Heart left ventricle (tissue), 16 donors: ENCODE measurements at regions of chr15 and their contacts with region 1.

Region 1: GRCh38 chr15:64355944-64356709 is at the start of gene CSNK1G1:
- DNase-seq: peak; percentile 96 to 97 (median 96)
- ATAC-seq: peak; percentile 100
- H3K4me3 ChIP-seq: peak within 1 kb of the TSS; percentile 59 to 98 (median 84)
- H3K27ac ChIP-seq: peak within 1 kb of the TSS; percentile 16 to 85 (median 76)
- H3K4me1 ChIP-seq: peaks cover 0 to 32% (median 12%) of the 10 kb centered on the region in 12 donors
- H3K27me3 ChIP-seq: no peaks in the 10 kb centered on the region
- CTCF ChIP-seq: peak in 8 of 12 donors; percentile 22 to 52 (median 35)
- POLR2A ChIP-seq: peak in 1 of 2 donors; percentile 34
- total RNA-seq, gene CSNK1G1: 3.9 to 15.0 (median 7.6) TPM

Region 2: DNA sequence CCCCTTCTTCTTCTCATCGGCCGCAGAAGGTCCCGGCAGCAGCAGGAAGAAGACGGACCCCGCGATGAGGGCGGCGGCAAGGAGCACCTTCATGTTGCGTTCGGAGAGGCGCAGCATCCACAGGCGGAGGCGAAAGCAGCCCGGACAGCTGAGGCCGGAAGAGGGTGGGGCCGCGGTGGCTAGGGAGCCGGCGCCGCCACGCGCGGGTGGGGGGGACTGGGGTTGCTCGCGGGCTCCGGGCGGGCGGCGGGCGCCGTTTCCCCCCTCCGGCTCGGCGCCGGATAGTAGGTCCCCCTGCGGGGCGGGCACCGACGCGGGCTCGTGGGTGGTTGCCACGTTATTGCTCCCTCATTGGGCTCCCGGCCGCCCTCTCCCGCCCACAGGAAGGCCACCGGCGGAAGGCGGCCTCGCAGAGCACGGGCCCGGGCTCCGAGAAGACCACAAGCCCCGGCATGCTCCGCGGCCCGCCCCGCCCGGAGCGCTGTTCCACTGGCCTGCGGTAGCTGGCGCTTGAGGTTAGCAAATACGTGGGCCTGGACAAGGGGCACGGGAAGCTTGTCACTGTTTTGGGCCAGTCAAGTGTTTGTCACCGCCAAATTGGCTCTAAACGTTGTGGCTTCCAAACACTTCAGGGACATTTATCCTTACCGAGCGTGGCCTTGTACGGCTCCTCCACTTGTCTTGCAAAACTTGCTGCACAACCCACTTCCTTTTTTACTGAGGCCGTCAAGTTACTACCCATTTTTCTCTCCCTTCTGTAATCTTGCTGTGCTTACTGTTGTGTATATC is 193.1 kb before region 1 on chr15 and contains the start of gene PPIB:
- intact Hi-C with region 1: loop called in 4 of 10 experiments (anchors 5 kb)
- DNase-seq: peak; percentile 97 to 100 (median 99)
- ATAC-seq: peak; percentile 94 to 97 (median 96)
- H3K4me3 ChIP-seq: peak within 1 kb of the TSS; percentile 67 to 95 (median 84)
- H3K27ac ChIP-seq: peak within 1 kb of the TSS; percentile 72 to 95 (median 90)
- H3K4me1 ChIP-seq: peaks cover 11 to 58% (median 44%) of the 10 kb centered on the region in 12 donors
- H3K27me3 ChIP-seq: no peaks in the 10 kb centered on the region
- CTCF ChIP-seq: peak in 11 of 12 donors; percentile 20 to 76 (median 43)
- POLR2A ChIP-seq: peak; percentile 41 to 72
- total RNA-seq, gene PPIB: 73.7 to 239 (median 113) TPM

Region 3: DNA sequence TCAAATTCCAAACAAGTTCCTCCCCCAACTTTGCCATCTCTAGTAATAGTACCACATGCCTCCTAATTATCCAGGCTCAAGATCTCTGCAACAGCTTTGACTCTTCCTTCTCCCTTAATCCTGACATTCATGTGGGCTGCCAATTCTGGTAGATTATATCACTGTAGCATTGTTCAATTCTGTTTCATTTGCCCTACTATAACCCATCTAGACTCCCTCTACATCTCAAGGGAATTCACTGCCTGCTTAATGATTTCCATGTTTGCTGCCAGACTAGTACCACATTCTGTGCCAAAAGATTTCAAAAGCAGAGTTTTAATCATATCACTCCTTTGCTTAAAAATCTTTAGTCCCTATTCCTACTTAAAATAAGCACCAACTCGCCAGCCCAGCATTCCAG is 158.7 kb before region 1 on chr15:
- intact Hi-C with region 1: loop called in 1 of 10 experiments (anchors 5 kb)
- DNase-seq: no peak
- ATAC-seq: peak in 1 of 4 donors; percentile 31
- H3K4me3 ChIP-seq: no peak overlapping the region
- H3K27ac ChIP-seq: no peak overlapping the region
- H3K4me1 ChIP-seq: peaks cover 0 to 6% (median 0%) of the 10 kb centered on the region in 12 donors
- H3K27me3 ChIP-seq: no peaks in the 10 kb centered on the region
- CTCF ChIP-seq: no peak
- POLR2A ChIP-seq: no peak

Region 4: DNA sequence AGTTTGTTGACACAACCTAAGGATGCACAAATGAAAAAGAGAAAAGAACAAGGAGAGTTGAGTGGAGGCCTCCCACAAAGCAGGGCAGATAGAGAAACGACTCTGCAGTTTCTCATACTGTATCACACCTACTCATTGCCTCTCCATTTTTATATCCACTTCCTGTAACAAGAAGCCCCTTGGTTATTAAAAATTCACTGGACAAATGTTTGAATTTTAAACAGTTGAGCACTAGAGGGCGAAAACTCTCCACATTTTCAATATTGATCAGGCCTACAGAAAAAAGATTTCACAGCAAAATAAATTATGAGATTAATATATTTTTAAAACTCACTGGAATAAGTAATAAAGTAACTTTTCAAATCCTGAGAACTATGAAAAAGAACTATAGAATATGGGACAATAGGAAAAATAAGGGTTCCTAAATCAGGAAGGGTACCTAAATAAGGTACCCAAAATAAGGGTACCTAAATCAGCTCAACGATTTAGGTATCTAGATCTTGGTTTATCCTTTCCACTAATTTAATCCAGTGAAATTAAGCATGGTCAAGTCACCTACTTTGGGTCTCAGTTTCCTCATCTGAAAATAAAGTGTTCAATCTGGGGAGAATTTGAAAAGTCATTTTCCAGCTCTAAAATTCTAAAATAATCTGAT is 146.3 kb before region 1 on chr15:
- intact Hi-C with region 1: loop called in 7 of 10 experiments (anchors 5 to 10 kb)
- DNase-seq: no peak
- ATAC-seq: no peak
- H3K4me3 ChIP-seq: no peak overlapping the region
- H3K27ac ChIP-seq: no peak overlapping the region
- H3K4me1 ChIP-seq: no peaks in the 10 kb centered on the region
- H3K27me3 ChIP-seq: no peaks in the 10 kb centered on the region
- CTCF ChIP-seq: peak; percentile 28 to 55 (median 44)
- POLR2A ChIP-seq: no peak

Region 5: DNA sequence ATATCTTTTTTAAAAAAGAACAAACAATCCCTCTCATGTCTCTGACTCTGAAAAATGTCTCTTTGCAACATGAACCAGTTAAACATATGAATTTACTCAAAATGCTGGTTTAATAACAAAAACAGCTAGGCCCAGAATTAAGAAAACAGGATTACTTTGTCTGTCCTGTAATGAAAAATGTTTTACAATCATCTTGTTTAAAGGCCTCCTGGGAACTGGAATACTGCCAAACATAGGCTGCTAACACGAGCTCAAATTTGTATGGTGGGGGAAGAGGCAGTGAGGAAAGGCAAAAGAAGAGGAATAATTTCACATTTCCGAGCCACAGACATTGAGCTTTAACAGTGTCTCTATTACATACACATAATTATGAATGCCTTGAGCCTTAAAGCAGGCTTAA is 131.6 kb before region 1 on chr15:
- intact Hi-C with region 1: loop called in 4 of 10 experiments (anchors 10 kb)
- DNase-seq: peak in 3 of 5 donors; percentile 26 to 59 (median 46)
- ATAC-seq: peak in 2 of 4 donors; percentile 37 to 52
- H3K4me3 ChIP-seq: no peak overlapping the region
- H3K27ac ChIP-seq: peak overlapping the region in 3 of 12 donors; percentile 11 to 37 (median 33)
- H3K4me1 ChIP-seq: peaks cover 0 to 14% (median 10%) of the 10 kb centered on the region in 12 donors
- H3K27me3 ChIP-seq: no peaks in the 10 kb centered on the region
- CTCF ChIP-seq: no peak
- POLR2A ChIP-seq: no peak

Region 6: GRCh38 chr15:64381000-64381752 is 25.0 kb after region 1 on chr15 and contains the start of gene PCLAF:
- intact Hi-C with region 1: loop called in 2 of 10 experiments (anchors 2 kb)
- DNase-seq: peak; percentile 94 to 97 (median 95)
- ATAC-seq: peak; percentile 100
- H3K4me3 ChIP-seq: peak within 1 kb of the TSS; percentile 38 to 76 (median 60)
- H3K27ac ChIP-seq: no peak within 1 kb of the TSS
- H3K4me1 ChIP-seq: peaks cover 0 to 14% (median 6%) of the 10 kb centered on the region in 12 donors
- H3K27me3 ChIP-seq: no peaks in the 10 kb centered on the region
- CTCF ChIP-seq: peak in 1 of 12 donors; percentile 8
- POLR2A ChIP-seq: no peak
- total RNA-seq, gene PCLAF: 0.14 to 4.8 (median 0.60) TPM in 5 of 9 donors, not detected in the others

Region 7: DNA sequence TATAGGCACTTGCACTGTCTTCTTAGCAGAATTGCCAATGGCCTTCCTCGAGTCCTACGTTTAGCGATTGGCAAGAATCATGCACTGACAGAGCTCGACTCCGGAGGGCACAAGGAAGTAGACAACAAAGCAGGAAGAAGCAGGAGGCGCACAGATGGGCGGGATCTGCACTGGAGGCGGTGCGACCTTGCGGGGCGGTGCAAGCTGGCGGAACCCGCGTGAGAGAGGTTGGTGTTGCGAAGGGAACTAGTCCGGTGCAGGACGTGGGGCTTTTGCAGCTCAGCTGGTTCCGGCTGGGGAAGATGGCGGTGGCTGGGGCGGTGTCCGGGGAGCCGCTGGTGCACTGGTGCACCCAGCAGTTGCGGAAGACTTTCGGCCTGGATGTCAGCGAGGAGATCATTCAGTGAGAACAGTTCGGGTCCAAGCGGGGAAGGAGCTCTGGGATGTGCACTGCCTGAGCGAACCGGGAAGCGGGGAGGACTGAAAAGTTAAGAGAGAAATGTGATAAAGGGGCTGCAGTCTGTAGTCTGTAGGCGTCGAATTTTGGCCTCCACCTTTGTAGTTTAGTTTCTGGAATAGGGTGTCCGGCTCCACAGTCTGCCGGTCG is 31.5 kb after region 1 on chr15 and contains the start of gene TRIP4:
- intact Hi-C with region 1: loop called in 1 of 10 experiments (anchors 2 kb)
- DNase-seq: peak; percentile 95 to 97 (median 97)
- ATAC-seq: peak; percentile 99 to 100 (median 100)
- H3K4me3 ChIP-seq: peak within 1 kb of the TSS; percentile 33 to 92 (median 76)
- H3K27ac ChIP-seq: peak within 1 kb of the TSS in 11 of 12 donors; percentile 41 to 92 (median 80)
- H3K4me1 ChIP-seq: peaks cover 0 to 19% (median 9%) of the 10 kb centered on the region in 12 donors
- H3K27me3 ChIP-seq: no peaks in the 10 kb centered on the region
- CTCF ChIP-seq: peak in 3 of 12 donors; percentile 20 to 37 (median 27)
- POLR2A ChIP-seq: peak in 1 of 2 donors; percentile 68
- total RNA-seq, gene TRIP4: 5.9 to 22.7 (median 15.1) TPM

Region 8: GRCh38 chr15:64653760-64654159 is 297.6 kb after region 1 on chr15:
- intact Hi-C with region 1: no loop called
- DNase-seq: no peak
- ATAC-seq: no peak
- H3K4me3 ChIP-seq: no peak overlapping the region
- H3K27ac ChIP-seq: no peak overlapping the region
- H3K4me1 ChIP-seq: peaks cover 0 to 17% (median 0%) of the 10 kb centered on the region in 12 donors
- H3K27me3 ChIP-seq: no peaks in the 10 kb centered on the region
- CTCF ChIP-seq: peak in 10 of 12 donors; percentile 19 to 58 (median 30)
- POLR2A ChIP-seq: no peak